Left ventricle myocardium inferior (tissue), 1 donor: ENCODE measurements at regions of chr9 and their contacts with region 1.

Region 1: GRCh38 chr9:113657703-113658544 is 194.4 kb downstream of the RGS3 start:
- DNase-seq: peak; percentile 85
- H3K4me3 ChIP-seq: no peak overlapping the region
- H3K27ac ChIP-seq: peak overlapping the region; percentile 9
- H3K4me1 ChIP-seq: peaks cover 44% of the 10 kb centered on the region
- H3K27me3 ChIP-seq: no peaks in the 10 kb centered on the region
- CTCF ChIP-seq: peak; percentile 98

Region 2: DNA sequence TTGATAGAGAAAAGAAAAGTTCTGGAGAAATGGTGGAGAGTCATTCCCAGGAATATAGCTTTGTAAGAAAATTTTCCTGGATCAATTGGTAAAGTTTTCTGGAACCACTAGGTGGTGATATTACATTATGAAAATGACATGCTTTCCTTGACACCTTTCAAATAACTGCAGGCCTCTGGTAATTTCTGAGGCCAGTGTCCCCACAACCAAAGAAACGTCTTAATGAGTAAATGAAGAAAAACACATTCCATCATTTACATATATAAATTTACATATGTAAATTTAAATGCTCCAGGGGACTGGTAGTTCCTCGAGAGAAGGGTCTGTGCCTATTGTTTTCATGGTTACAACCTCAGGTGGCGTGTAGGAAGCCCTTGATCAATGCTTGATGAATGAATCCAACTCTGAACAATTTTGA is 211.6 kb before region 1 on chr9:
- intact Hi-C with region 1: loop called (anchors 5 kb)
- DNase-seq: no peak
- H3K4me3 ChIP-seq: no peak overlapping the region
- H3K27ac ChIP-seq: peak overlapping the region; percentile 72
- H3K4me1 ChIP-seq: peaks cover 14% of the 10 kb centered on the region
- H3K27me3 ChIP-seq: no peaks in the 10 kb centered on the region
- CTCF ChIP-seq: peak; percentile 76

Region 3: DNA sequence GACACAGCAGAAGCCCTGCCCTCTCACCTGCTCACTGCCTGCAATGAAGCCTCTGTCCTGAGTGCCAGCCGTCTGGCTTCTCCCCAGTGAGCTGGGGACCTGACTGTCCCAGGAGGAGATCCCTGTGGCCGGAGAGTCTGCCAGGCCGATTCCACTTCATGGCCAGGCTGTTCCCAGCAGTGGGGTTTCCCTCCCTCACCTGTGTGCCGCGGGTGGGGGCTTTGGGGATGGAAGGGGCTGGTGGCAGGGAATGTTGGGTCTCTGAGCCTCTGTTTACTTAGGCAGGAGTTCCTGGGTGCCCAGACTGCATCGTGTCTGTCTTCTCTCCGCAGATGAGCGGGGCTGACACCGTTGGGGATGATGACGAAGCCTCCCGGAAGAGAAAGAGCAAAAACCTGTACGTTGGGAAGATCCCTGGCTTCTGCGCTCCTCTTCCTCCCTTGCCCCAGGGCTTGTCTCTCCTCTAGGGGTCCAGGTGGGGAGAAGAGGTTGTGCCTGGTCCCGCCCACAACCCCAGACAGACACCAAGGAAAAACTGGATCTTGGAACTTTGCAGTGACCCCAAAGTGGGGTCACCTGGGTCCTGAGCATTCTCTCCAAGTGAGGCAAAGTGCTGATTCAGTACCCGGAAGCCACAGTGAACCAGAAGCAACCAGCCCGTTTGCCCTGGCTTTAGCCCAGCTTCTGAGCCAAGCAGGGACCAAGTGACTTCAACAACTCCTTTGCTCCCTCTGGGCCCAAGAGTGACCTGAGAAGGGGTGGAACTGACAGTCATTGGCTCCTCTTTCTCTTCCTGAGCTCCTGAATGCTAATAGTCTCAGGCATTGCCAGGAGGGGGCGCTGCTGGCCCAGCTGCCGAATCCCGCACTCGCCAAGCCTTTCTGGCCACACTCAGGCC is 66.7 kb before region 1 on chr9:
- intact Hi-C with region 1: loop called (anchors 1 kb)
- DNase-seq: peak; percentile 85
- H3K4me3 ChIP-seq: no peak overlapping the region
- H3K27ac ChIP-seq: peak overlapping the region; percentile 94
- H3K4me1 ChIP-seq: peaks cover 97% of the 10 kb centered on the region
- H3K27me3 ChIP-seq: no peaks in the 10 kb centered on the region
- CTCF ChIP-seq: peak; percentile 96

Region 4: DNA sequence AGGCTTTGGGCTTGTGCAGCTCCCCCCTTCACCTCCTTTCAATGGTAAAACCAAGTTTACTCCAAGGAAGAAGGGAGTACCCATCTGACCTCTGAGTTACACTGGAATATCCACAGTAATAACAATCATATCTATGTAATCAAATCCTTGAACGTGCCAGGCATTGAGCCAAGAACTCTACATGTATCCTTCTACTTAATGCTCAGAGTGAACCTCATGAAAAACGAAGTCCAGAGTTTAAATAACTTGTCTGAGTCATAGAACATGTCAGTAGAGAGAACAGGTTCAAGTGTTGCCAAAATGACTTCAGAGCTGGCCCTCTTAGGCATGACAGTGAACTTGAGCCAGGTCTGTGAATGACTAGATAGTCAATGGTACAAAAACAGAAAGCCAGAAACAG is 54.1 kb after region 1 on chr9:
- intact Hi-C with region 1: no loop called
- DNase-seq: no peak
- H3K4me3 ChIP-seq: no peak overlapping the region
- H3K27ac ChIP-seq: no peak overlapping the region
- H3K4me1 ChIP-seq: peaks cover 4% of the 10 kb centered on the region
- H3K27me3 ChIP-seq: no peaks in the 10 kb centered on the region
- CTCF ChIP-seq: no peak